ENCODE measurements at regions of chr19 and their contacts with region 1.

Region 1: GRCh38 chr19:55605207-55605636 is 225 bp upstream of the ZNF865 start:
- DNase-seq: peak; percentile 95 to 99 (median 97)
- ATAC-seq: peak; percentile 77 to 79
- H3K4me3 Mint-ChIP-seq: peak overlapping the region; percentile 78 to 93 (median 89)
- H3K27ac Mint-ChIP-seq: peak overlapping the region; percentile 78 to 98 (median 94)
- H3K4me1 Mint-ChIP-seq: peaks cover 37 to 64% (median 61%) of the 10 kb centered on the region in 4 donors
- H3K27me3 Mint-ChIP-seq: no peaks in the 10 kb centered on the region

Region 2: DNA sequence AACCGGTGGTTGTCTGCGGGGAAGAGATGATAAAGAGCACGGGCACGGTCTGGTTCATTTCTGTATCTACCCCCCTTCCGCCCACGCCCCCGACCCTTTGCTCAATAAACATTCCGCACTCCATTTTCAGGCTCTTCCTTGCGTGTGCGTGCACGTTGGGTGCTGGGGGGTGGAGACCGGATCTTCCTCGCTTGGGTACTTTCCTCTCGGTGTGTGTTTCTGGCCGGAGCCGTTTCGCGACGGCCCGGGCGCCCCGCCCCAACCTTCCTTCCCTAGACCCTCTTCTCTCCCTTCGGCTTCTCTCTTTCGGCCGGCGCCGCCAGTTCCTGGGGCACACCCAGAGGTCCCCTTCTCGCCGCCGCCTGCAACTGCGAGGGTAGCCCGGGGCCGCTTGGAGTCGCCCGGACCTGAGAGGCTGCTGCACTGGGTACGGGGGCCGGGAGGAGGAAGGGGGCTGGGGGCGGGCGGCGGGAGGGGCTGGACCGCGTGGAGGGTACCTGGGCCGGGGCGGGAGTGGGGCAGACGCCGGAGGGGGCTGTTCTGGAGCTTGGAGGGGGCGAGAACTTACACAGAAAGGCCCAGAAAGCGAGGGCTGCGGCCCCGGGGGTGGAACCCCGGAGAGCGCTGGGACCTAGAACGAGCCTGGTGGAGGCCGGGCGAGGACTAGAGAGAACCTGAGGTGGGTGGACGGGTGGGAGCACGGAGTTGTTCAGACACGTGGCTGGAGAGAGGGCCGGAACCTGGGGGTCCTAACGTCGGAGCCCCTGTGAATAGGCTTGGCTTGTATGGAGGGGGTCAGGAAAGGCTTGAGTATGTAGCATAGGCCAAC is 38.3 kb after region 1 on chr19 and contains the start of gene ZNF581:
- POLR2A ChIA-PET with region 1: interaction called, 21 read pairs
- DNase-seq: peak; percentile 67 to 86 (median 76)
- ATAC-seq: peak; percentile 45 to 51
- H3K4me3 Mint-ChIP-seq: peak within 1 kb of the TSS; percentile 91 to 99 (median 94)
- H3K27ac Mint-ChIP-seq: peak within 1 kb of the TSS; percentile 94 to 99 (median 98)
- H3K4me1 Mint-ChIP-seq: peaks cover 30 to 64% (median 60%) of the 10 kb centered on the region in 4 donors
- H3K27me3 Mint-ChIP-seq: no peaks in the 10 kb centered on the region
- polyA plus RNA-seq, gene ZNF581: 21.2 to 35.9 (median 34.9) TPM

Region 3: GRCh38 chr19:55653758-55654539 is 48.7 kb after region 1 on chr19:
- POLR2A ChIA-PET with region 1: interaction called, 37 read pairs
- DNase-seq: peak; percentile 99 to 100 (median 100)
- ATAC-seq: peak; percentile 80 to 81
- H3K4me3 Mint-ChIP-seq: peak overlapping the region; percentile 88 to 99 (median 97)
- H3K27ac Mint-ChIP-seq: peak overlapping the region; percentile 97 to 100 (median 99)
- H3K4me1 Mint-ChIP-seq: peaks cover 25 to 56% (median 54%) of the 10 kb centered on the region in 4 donors
- H3K27me3 Mint-ChIP-seq: no peaks in the 10 kb centered on the region

Region 4: DNA sequence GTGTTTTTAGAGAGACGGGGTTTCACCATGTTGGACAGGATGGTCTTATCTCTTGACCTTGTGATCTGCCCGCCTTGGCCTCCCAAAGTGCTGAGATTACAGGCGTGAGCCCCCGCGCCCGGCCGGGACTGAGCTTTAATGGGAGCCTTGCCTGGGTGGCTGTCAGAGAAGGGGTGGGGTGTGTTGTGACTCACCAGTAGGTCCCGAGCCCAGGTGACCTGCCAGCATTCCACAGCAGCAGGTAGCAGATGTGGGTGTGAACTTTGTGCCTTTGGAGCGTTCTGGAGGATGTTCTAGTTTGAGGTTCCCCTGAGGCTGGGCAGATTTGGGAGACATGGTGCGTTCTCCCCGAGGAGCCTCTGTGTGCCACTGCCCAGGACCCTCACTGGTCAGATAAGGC is 62.7 kb after region 1 on chr19:
- POLR2A ChIA-PET with region 1: no interaction called
- DNase-seq: no peak
- ATAC-seq: no peak
- H3K4me3 Mint-ChIP-seq: no peak overlapping the region
- H3K27ac Mint-ChIP-seq: no peak overlapping the region
- H3K4me1 Mint-ChIP-seq: peaks cover 18 to 57% (median 34%) of the 10 kb centered on the region in 4 donors
- H3K27me3 Mint-ChIP-seq: no peaks in the 10 kb centered on the region

Measured in naive thymus-derived CD8-positive, alpha-beta T cell (primary cell).